ENCODE measurements at regions of chr5 and their contacts with region 1.

Region 1: DNA sequence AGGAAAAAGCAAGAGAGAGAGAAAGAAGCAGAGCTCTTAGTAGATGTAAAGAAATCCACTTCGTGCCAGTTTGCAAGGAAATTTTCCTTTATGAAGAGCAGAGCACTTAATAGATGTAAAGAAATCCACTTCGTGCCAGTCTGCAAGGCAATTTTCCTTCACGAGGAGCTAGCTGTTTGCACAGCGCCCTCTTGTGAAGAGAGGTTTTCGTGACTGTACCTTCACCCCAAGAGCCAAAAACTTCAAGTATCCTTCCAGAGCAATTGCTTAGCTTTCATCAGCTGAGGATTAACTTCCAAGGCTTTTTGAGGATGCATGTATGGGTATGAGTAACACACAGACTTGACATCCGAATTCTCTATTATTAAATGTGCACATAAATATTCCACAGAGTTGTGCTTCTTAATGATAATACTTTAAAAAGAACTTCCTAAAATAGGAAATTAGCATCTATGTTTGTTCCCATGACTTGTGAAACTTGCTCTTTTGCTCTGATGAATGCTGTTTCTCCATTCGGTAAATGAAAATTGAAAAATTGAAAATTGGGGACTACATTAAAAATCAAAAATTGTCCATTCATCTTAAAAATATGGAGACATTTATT is 525.6 kb downstream of the PDE4D start:
- DNase-seq: peak in 9 of 10 donors; percentile 20 to 68 (median 59)
- H3K4me3 ChIP-seq: peak overlapping the region in 13 of 59 donors; percentile 1 to 45 (median 18)
- H3K27ac ChIP-seq: peak overlapping the region in 1 of 59 donors; percentile 2
- H3K27me3 ChIP-seq: no peaks in the 10 kb centered on the region
- CTCF ChIP-seq: peak; percentile 57 to 93 (median 79)

Region 2: GRCh38 chr5:59188419-59189225 is 179.3 kb before region 1 on chr5:
- intact Hi-C with region 1: loop called in 1 of 2 experiments (anchors 5 kb)
- DNase-seq: peak; percentile 40 to 75 (median 68)
- H3K4me3 ChIP-seq: peak overlapping the region in 57 of 59 donors; percentile 0 to 64 (median 39)
- H3K27ac ChIP-seq: peak overlapping the region in 24 of 59 donors; percentile 0 to 70 (median 44)
- H3K27me3 ChIP-seq: no peaks in the 10 kb centered on the region
- CTCF ChIP-seq: peak; percentile 74 to 99 (median 92)

Region 3: DNA sequence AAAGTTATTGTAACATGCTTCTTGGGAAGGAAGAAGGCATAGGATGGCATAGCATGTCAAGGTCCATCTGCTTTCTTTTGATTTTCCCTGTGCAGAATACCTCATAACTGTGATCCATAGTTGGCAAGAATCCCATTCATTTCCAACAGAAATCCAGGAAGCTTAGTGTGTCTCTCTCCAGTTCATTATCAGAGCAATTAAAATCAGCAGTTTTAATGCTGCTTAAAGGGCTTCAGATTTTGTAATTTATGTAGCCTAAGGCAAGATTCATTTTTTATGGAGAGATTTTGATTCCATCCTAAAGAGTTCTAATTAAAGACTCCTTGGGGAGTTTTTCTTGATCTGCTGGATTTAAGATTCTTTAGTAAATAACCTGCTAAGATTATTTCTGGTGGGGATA is 34.5 kb before region 1 on chr5:
- intact Hi-C with region 1: loop called in 1 of 2 experiments (anchors 5 kb)
- DNase-seq: no peak
- H3K4me3 ChIP-seq: no peak overlapping the region
- H3K27ac ChIP-seq: no peak overlapping the region
- H3K27me3 ChIP-seq: no peaks in the 10 kb centered on the region
- CTCF ChIP-seq: no peak

Region 4: DNA sequence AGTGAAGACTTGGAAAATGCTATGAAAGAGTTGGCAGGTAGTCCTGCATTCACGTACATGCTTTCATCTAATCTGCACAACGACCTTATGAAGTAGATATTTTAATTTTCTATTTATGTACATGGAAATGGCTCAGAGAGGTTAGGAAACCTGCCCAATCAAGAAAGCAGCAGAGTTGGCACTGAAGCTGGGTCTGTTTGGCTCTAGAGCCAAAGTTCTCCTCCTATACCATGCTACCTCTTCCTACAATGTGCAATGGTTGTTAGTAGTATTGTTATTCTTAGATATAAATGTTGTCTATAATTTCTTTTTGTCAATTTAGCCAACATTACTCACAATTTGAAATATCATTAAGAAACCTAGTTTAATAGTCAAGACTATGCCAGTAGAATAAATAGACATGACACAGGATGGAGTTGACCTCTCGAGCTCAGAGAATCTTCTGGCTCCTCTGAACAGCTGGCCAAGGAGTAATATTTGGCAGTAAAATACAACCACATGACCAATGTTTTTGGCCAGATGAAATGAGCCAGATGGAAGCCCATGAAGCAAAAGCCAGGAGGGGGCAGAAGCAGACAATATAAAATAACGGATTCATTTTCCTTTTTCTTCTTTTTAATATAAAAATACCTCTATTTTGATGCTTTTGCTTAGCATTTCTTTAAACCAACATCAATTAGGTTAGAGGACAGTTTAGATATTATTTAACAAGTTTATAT is 16.7 kb before region 1 on chr5:
- intact Hi-C with region 1: no loop called
- DNase-seq: peak in 1 of 10 donors; percentile 30
- H3K4me3 ChIP-seq: peak overlapping the region in 3 of 59 donors; percentile 6 to 42 (median 13)
- H3K27ac ChIP-seq: peak overlapping the region in 39 of 59 donors; percentile 0 to 70 (median 40)
- H3K27me3 ChIP-seq: no peaks in the 10 kb centered on the region
- CTCF ChIP-seq: peak in 52 of 56 donors; percentile 15 to 62 (median 38)

Region 5: GRCh38 chr5:59673438-59674058 is 305.7 kb after region 1 on chr5:
- intact Hi-C with region 1: no loop called
- DNase-seq: no peak
- H3K4me3 ChIP-seq: no peak overlapping the region
- H3K27ac ChIP-seq: no peak overlapping the region
- H3K27me3 ChIP-seq: no peaks in the 10 kb centered on the region
- CTCF ChIP-seq: peak; percentile 71 to 98 (median 90)

Measured in dorsolateral prefrontal cortex (tissue), 120 donors.